OCI-LY7 (cell line): ENCODE measurements at regions of chr1 and their contacts with region 1.

Region 1: DNA sequence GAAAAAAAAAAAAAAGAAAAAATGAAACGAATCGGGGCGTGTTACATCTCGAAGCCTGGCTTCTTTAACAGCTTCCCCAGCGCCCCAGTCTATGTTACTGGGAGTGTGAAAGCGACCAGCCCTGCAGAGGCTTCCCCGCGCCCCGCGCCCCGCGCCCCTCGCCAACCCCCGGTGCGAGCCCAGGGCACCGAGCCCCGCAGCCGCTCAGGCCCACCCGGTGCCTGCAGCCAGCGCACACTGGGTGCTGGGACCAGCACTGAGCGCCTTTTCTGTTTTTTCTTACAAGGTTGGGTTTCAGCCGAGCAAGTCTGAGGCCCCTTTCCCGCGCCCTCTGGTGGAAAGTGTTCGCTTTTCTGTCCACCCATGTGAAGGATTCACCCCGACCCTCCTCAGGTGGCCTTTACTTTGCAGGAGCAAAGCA is 42.1 kb upstream of the ZNF496 start:
- DNase-seq: peak; percentile 71
- H3K4me3 ChIP-seq: peak overlapping the region; percentile 61
- H3K27ac ChIP-seq: no peak overlapping the region
- H3K4me1 ChIP-seq: no peaks in the 10 kb centered on the region
- CTCF ChIP-seq: peak; percentile 72

Region 2: GRCh38 chr1:247576495-247576894 is 202.8 kb after region 1 on chr1:
- CTCF ChIA-PET with region 1: no interaction called
- POLR2A ChIA-PET with region 1: no interaction called
- intact Hi-C with region 1: loop called (anchors 5 kb)
- DNase-seq: peak; percentile 11
- H3K4me3 ChIP-seq: no peak overlapping the region
- H3K27ac ChIP-seq: no peak overlapping the region
- H3K4me1 ChIP-seq: no peaks in the 10 kb centered on the region
- CTCF ChIP-seq: peak; percentile 78